BJ (cell line): ENCODE measurements at regions of chr6 and their contacts with region 1.

Region 1: DNA sequence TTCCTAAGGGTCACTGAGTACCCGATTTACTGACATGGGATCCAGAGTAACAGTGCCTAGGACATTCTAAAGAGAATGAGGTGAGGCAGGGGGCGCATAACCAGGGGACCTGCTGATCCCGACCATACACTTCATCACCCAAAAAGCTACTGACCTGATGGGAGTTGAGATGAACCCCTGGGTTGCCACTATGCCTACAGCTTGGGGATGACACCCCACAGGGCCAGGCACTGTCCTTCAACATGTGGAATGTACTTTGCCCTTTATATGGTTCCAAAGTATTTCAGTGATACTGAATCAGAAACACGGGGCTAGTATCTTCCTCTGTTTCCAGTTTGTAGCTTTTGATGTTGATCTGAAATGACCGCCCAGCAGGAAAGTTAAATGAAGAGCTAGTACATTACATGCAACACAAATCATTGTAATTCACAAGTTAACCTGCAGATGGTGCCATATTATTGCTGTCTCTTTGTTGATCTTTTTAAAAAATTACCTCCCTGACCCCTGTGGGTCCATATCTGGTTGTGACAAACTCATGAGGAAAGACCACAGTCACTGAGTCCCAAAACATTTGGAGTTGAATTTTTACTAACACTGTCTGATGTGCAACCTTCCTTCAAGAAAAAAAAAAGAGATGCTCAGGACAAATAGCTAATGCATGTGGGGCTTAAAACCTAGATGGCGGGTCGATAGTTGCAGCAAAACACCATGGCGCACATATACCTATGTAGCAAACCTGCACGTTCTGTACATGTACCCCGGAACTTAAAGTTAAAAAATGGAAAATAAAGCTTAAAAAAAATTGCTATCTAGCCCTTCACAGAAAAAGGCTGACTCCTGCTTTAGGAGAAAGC is 42.7 kb upstream of the GCNT2 start:
- DNase-seq: no peak
- H3K4me3 ChIP-seq: no peak overlapping the region
- H3K27me3 ChIP-seq: no peaks in the 10 kb centered on the region
- CTCF ChIP-seq: peak; percentile 55

Region 2: GRCh38 chr6:10300071-10300470 is 178.3 kb before region 1 on chr6:
- CTCF ChIA-PET with region 1: no interaction called
- POLR2A ChIA-PET with region 1: no interaction called
- DNase-seq: no peak
- H3K4me3 ChIP-seq: no peak overlapping the region
- H3K27me3 ChIP-seq: no peaks in the 10 kb centered on the region
- CTCF ChIP-seq: no peak

Region 3: GRCh38 chr6:10355115-10355702 is 123.2 kb before region 1 on chr6:
- CTCF ChIA-PET with region 1: no interaction called
- POLR2A ChIA-PET with region 1: no interaction called
- DNase-seq: no peak
- H3K4me3 ChIP-seq: no peak overlapping the region
- H3K27me3 ChIP-seq: no peaks in the 10 kb centered on the region
- CTCF ChIP-seq: no peak

Region 4: DNA sequence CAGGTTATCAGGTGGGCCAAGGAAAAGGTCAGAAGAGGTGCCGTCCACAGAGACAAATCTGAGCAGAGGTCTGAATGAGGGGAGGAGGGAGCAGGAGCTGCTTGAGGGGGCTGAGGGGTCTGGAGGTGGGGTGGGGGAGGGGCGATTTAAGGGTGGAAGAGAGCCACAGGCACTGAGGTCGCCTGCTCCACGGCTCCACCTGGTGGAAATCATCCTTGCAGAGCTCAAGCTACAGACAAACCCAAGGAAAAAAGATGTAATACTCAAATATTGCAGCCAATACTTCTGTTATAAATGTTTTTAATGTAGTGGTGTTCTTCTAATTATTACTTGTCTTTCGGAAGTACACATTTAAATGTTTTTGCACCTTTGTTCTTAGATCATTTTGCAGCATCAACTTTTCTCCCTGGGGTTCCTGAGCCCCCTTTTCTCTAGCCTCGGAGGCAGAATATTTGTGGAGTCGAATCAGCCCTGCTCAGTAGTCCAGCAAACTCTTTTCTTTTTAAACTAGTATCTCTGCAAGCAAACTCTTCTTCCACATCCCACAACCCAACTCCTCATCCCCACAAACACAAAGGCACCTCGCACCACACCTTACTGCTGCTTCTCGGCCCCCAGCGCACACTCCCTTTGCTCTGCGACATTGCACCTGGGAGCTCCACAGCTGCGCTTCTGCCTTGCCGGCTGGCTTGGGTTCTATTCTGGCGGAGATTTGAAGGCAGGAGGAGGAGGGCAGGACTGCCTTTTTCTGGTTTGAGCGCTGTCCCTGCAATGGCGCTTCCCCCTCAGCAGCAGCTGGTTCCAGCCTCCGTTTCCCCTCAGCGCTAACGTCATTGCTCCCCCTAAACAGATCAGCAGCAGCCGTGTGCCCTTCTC is 12.5 kb before region 1 on chr6:
- CTCF ChIA-PET with region 1: interaction called, 18 read pairs
- POLR2A ChIA-PET with region 1: no interaction called
- DNase-seq: no peak
- H3K4me3 ChIP-seq: no peak overlapping the region
- H3K27me3 ChIP-seq: no peaks in the 10 kb centered on the region
- CTCF ChIP-seq: peak; percentile 67

Region 5: DNA sequence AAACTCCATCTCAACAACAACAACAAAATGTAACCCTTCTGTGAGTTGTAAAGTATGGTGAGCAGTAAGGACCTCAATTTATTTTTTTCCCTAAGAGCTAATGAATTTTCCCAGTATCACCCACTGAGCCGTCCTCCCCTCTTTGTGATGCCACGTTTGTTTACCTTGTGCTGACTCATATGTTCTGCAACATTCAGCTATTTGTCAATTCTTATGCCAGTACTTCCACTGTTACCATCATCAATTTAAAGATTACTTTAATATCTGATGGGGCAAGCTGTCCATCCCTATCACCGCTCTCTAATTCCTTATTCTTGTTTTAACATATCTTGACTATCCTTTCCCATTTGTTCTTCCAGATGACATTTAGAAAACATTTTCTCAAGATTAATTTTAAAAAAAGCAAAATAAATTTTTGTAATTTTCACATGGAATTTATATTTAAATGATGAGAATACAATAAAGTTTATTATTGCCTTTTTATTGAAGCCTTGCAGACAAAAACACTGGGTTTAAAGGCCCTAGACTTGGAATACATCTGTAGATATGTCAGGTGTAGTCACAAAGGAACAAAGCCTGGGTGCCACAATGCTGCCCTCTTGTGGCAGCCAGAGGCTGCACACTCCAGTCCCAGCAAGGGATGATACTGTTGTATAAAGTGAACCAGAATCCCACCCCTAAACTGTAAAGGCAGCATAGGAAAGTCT is 322.6 kb after region 1 on chr6:
- CTCF ChIA-PET with region 1: interaction called, 92 read pairs
- POLR2A ChIA-PET with region 1: no interaction called
- DNase-seq: no peak
- H3K4me3 ChIP-seq: no peak overlapping the region
- H3K27me3 ChIP-seq: no peaks in the 10 kb centered on the region
- CTCF ChIP-seq: peak; percentile 100